Endothelial cell of umbilical vein (primary cell): ENCODE measurements at regions of chr13 and their contacts with region 1.

Region 1: DNA sequence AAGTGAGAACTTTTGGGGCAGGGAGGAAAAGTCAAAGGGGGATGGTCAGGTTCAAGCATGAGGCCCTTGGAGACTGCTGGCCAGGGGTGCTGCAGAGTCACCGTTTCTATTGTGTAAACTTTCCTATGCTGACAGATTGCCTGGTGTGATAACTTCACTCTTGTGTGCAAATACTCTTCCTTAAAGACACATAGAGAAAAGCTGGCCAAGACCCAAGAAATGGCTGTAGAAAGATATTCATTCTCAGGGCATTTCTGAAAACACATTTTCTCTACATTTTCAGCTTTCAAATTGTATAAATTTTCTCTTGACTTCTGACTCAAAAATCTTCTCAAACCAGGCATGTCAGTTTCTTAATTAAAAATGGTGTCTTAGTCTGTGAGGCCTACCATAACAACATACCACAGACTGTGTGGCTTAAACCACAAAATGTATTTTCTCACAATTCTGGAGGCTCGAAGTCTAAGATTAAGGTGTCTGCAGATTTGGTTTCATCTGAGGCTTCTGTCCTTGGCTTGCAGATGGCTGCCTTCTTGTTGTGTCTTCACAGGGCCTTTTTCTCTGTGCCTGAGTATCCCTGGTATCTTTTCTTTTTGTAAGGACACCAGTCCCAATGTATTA is 304.5 kb downstream of the KCNRG start:
- DNase-seq: peak; percentile 84
- H3K4me3 ChIP-seq: no peak overlapping the region
- H3K27ac ChIP-seq: peak overlapping the region; percentile 77
- H3K4me1 ChIP-seq: peaks cover 17% of the 10 kb centered on the region
- H3K27me3 ChIP-seq: no peaks in the 10 kb centered on the region
- CTCF ChIP-seq: no peak
- POLR2A ChIP-seq: peak; percentile 21

Region 2: DNA sequence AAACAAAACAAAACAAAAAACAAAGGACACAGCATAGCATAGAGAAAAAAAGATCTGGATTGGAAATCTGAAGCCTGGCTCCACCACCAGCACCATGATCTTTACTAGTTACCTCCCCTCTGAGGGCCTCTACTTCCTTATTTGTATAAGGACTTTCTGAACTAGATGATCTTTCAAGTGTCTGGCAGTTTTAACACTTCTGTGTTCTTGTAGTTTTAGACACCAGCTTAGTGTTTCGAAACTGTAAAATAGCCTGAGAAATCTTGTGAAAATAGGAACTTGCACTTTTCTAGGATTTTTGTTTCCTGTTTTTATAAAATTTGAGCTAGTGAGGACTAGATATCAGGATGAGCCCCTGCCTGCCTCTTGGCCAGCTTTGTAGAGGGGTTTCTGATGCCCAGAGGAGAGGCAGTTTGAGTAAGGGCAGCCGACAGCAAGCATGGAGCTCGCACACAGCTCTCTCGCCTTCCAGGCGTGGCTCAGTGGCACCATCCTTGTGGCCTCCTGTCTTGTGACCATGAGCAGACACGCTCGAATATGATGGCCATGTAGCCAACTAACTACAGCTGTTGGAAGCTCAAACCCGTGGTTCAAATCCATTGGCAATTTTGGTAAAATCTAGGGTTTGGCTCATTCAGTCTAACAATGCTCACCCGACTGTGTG is 14.5 kb after region 1 on chr13:
- CTCF ChIA-PET with region 1: interaction called, 10 read pairs
- POLR2A ChIA-PET with region 1: no interaction called
- dilution Hi-C with region 1: no loop called
- intact Hi-C with region 1: no loop called
- DNase-seq: peak; percentile 7
- H3K4me3 ChIP-seq: no peak overlapping the region
- H3K27ac ChIP-seq: peak overlapping the region; percentile 7
- H3K4me1 ChIP-seq: peaks cover 10% of the 10 kb centered on the region
- H3K27me3 ChIP-seq: no peaks in the 10 kb centered on the region
- CTCF ChIP-seq: no peak
- POLR2A ChIP-seq: no peak